PC-3 (cell line): ENCODE measurements at regions of chr4 and their contacts with region 1.

Region 1: DNA sequence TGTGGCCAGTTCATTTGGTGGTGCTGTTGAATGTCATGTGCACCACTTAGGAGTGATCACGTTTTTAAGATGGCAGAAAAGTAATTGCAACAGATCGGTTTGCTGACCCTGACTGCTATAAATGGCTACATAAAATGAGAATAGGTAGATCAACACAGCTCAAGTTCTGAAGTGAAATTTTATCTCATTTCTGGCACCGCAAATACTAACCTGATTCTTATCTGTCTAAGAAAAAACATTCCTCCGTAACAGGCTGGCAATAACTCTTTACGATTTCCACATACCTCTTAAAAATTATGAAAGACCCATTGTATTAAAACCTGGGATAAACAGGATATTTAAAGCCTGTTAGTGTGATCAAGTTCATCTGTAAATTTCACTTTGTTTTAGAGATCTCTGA is 387.5 kb downstream of the PDGFC start:
- DNase-seq: peak; percentile 76
- ATAC-seq: peak; percentile 82
- H3K4me3 ChIP-seq: peak overlapping the region; percentile 21; the same call in 1 of the 2 replicates
- H3K27ac ChIP-seq: peak overlapping the region; percentile 63
- H3K4me1 ChIP-seq: peaks cover 31% of the 10 kb centered on the region
- H3K27me3 ChIP-seq: no peaks in the 10 kb centered on the region
- CTCF ChIP-seq: no peak

Region 2: DNA sequence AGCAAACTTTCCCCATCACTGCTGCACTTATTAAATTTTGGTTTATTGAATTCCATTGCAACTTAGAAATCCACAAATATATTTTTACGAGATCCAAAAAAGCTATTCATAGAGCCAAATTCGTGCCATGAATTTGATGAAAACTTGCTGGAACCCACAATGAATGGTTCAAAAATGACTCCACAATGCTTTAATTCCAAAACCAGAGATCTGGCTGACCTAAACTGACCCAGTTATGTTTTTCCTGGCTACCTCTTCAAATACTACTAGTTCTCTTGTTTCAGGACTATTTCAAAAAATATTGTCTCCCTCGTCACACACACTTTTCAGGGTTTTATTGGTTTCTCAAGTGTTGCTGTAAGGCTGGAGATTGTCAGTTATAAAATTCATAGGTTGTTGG is 87.3 kb before region 1 on chr4:
- CTCF ChIA-PET with region 1: no interaction called
- POLR2A ChIA-PET with region 1: no interaction called
- intact Hi-C with region 1: loop called (anchors 5 kb)
- DNase-seq: peak; percentile 6
- ATAC-seq: no peak; the same call in 1 of the 2 replicates
- H3K4me3 ChIP-seq: no peak overlapping the region
- H3K27ac ChIP-seq: peak overlapping the region; percentile 40
- H3K4me1 ChIP-seq: 0 out of 2 replicates have a peak, but pooled peaks cover 7% of the 10 kb centered on the region
- H3K27me3 ChIP-seq: no peaks in the 10 kb centered on the region
- CTCF ChIP-seq: no peak

Region 3: GRCh38 chr4:156528216-156528615 is 55.9 kb before region 1 on chr4:
- CTCF ChIA-PET with region 1: no interaction called
- POLR2A ChIA-PET with region 1: no interaction called
- intact Hi-C with region 1: loop called (anchors 5 kb)
- DNase-seq: no peak
- ATAC-seq: no peak
- H3K4me3 ChIP-seq: no peak overlapping the region
- H3K27ac ChIP-seq: peak overlapping the region; percentile 62
- H3K4me1 ChIP-seq: peaks cover 13% of the 10 kb centered on the region
- H3K27me3 ChIP-seq: no peaks in the 10 kb centered on the region
- CTCF ChIP-seq: no peak